ENCODE measurements at regions of chr1 and their contacts with region 1.

Region 1: GRCh38 chr1:150922519-150922975 is 3.6 kb upstream of the SETDB1 start:
- DNase-seq: peak; percentile 80 to 85
- ATAC-seq: peak; percentile 74 to 79
- H3K4me3 ChIP-seq: no peak overlapping the region
- H3K27ac ChIP-seq: peak overlapping the region in 1 of 2 experiments; percentile 26; a peak in 1 of 6 replicates
- H3K4me1 ChIP-seq: peaks cover 15% of the 10 kb centered on the region; the same call in 2 of the 3 replicates
- CTCF ChIP-seq: peak; percentile 80
- EP300 ChIP-seq: no peak
- POLR2A ChIP-seq: no peak
- RAD21 ChIP-seq: peak; percentile 73 to 75

Region 2: GRCh38 chr1:150829743-150830142 is 92.8 kb before region 1 on chr1:
- CTCF ChIA-PET with region 1: interaction called, 10 read pairs
- POLR2A ChIA-PET with region 1: no interaction called
- DNase-seq: peak; percentile 12 to 17
- ATAC-seq: peak in 1 of 2 experiments; percentile 73; a peak in 3 of 6 replicates
- H3K4me3 ChIP-seq: no peak overlapping the region
- H3K27ac ChIP-seq: no peak overlapping the region
- H3K4me1 ChIP-seq: no peaks in the 10 kb centered on the region
- CTCF ChIP-seq: no peak
- EP300 ChIP-seq: no peak
- POLR2A ChIP-seq: no peak
- RAD21 ChIP-seq: 0 out of 5 replicates have a peak, but pooled peaks of 1 of the 2 experiments have one; percentile 4

Region 3: DNA sequence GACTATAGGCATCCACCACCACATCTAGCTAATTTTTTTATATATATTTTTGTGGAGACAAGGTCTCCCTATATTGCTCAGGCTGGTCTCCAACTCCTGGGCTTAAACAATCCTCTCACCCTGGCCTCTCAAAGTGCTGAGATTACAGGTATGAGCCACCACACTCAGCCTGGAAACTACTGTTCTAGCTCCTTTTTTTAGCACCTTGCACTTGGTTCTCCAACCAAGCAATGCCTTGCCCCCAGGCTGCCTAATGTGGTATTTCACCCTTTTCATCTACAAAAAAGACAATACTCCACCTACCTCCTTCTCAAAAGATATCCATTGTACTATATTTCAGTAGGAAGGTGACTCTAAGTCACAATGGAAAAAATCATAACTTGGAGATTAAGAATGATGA is 52.9 kb before region 1 on chr1:
- CTCF ChIA-PET with region 1: interaction called, 13 read pairs
- POLR2A ChIA-PET with region 1: no interaction called
- DNase-seq: no peak
- ATAC-seq: peak in 1 of 2 experiments; percentile 34; a peak in 1 of 6 replicates
- H3K4me3 ChIP-seq: no peak overlapping the region
- H3K27ac ChIP-seq: no peak overlapping the region
- H3K4me1 ChIP-seq: peaks cover 8% of the 10 kb centered on the region
- CTCF ChIP-seq: no peak
- EP300 ChIP-seq: no peak
- POLR2A ChIP-seq: no peak
- RAD21 ChIP-seq: no peak

Region 4: DNA sequence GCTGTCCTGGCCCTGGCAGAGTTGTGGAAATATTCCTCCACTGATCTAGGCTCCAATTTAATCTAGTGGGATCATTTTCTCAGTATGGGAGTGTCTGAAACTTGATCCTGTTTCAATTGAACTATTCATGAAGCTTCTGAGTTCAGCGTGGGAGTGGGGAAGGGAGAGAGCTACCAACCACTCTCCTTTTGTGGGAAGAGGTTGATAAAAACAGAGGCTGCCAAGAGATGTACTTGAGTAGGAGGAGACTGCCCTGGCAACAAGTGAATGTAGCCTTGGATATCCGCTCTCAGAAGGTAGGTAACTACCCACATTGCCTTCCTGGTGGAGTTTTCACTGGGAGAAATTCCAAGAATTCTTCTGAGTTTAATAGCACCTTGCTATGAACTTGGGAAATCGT is 35.5 kb before region 1 on chr1 and contains the start of gene CTXND2:
- CTCF ChIA-PET with region 1: interaction called, 41 read pairs
- POLR2A ChIA-PET with region 1: no interaction called
- DNase-seq: no peak
- ATAC-seq: 0 out of 6 replicates have a peak, but pooled peaks of 1 of the 2 experiments have one; percentile 25
- H3K4me3 ChIP-seq: no peak within 1 kb of the TSS
- H3K27ac ChIP-seq: no peak within 1 kb of the TSS
- H3K4me1 ChIP-seq: 0 out of 3 replicates have a peak, but pooled peaks cover 6% of the 10 kb centered on the region
- CTCF ChIP-seq: no peak
- EP300 ChIP-seq: no peak
- POLR2A ChIP-seq: no peak
- RAD21 ChIP-seq: no peak
- polyA plus RNA-seq, gene CTXND2: not detected in 2 replicates

Region 5: GRCh38 chr1:150955280-150955679 is 32.7 kb after region 1 on chr1:
- CTCF ChIA-PET with region 1: no interaction called
- POLR2A ChIA-PET with region 1: no interaction called
- DNase-seq: no peak
- ATAC-seq: no peak; a peak in 1 of 6 replicates
- H3K4me3 ChIP-seq: no peak overlapping the region
- H3K27ac ChIP-seq: no peak overlapping the region
- H3K4me1 ChIP-seq: no peaks in the 10 kb centered on the region
- CTCF ChIP-seq: no peak
- EP300 ChIP-seq: no peak
- POLR2A ChIP-seq: no peak
- RAD21 ChIP-seq: no peak

Measured in A549 (cell line).